Activated CD4-positive, alpha-beta memory T cell treated with anti-CD3 and anti-CD28 coated beads for 36 hours (primary cell): ENCODE measurements at regions of chr1 and their contacts with region 1.

Region 1: DNA sequence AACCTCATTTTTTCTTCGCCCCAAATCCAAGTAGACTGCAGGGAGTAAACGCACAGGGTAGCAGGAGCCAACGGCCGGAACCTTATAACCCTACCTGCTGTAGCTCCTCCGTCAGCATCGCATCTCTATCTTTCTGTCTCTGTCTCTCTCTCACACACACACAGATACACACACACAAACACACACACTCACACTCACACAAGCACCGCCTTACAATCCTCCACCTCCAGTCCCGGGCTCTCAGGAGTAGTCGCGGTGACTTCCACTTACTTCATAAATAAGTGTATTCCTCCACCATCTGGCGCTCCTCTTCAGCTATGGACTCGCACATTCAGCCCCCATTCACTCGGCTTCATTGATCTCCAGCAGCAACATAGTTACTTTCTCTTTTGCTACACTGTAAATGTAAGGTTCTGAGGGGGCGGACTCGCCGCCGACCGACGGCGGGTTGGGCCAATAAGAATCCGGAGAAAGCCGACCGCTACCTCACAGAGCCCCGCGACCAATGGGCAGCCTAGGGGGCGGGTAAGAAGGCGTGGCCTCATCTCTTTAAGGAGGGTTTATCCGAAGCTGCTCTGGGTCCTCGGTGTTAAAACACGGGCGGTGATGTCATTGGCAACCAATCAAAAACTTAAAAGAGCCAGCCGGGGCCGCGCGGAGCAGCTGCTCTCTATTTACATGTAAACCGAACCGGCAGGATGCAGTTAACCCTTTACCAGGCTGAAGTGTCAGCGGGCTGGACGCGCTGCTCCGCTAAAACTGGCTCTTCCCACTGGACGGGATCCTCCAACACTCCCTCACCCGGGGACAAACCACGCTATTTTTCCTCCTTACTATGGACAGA is at the start of gene DUSP10:
- DNase-seq: peak; percentile 99
- H3K4me3 Mint-ChIP-seq: no peak within 1 kb of the TSS
- H3K27ac Mint-ChIP-seq: peak within 1 kb of the TSS; percentile 64
- H3K4me1 Mint-ChIP-seq: peaks cover 37% of the 10 kb centered on the region
- H3K27me3 Mint-ChIP-seq: no peaks in the 10 kb centered on the region
- total RNA-seq, gene DUSP10: 8.8 to 8.9 TPM

Region 2: DNA sequence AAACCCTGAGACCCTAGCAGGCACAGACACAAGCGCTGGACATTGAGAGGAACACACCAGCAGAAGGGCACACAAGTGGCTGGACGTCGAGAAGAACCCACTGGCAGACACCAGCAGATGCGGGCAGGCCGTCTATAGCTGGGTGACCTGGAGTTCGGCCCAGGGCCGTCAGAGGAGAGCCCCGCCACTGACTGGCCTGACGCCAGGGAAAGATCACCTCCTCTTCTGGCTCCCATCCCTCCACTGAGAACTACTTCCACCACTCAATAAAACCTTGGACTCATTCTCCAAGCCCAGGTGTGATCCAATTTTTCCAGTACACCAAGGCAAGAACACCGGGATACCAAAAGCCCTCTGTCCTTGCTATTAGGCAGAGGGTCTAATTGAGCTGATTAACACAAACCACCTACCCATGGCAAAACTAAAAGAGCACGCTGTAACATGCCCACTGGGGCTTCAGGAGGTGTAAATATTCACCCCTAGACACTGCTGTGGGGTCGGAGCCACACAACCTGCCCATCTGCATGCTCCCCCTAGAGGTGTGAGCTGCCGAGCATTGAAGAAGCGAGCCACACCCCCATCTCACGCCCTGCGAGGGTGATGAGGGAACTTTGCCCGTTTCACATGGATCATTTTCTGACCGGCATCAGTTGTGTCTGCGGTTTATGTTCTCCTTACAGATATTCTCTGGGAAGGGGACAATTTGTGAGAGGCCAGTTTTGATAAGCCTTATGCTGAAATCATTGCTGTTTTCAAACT is 757.9 kb before region 1 on chr1:
- CTCF ChIA-PET with region 1: no interaction called
- POLR2A ChIA-PET with region 1: no interaction called
- intact Hi-C with region 1: no loop called
- DNase-seq: no peak
- H3K4me3 Mint-ChIP-seq: no peak overlapping the region
- H3K27ac Mint-ChIP-seq: no peak overlapping the region
- H3K4me1 Mint-ChIP-seq: no peaks in the 10 kb centered on the region
- H3K27me3 Mint-ChIP-seq: peaks cover under 1% of the 10 kb centered on the region

Region 3: DNA sequence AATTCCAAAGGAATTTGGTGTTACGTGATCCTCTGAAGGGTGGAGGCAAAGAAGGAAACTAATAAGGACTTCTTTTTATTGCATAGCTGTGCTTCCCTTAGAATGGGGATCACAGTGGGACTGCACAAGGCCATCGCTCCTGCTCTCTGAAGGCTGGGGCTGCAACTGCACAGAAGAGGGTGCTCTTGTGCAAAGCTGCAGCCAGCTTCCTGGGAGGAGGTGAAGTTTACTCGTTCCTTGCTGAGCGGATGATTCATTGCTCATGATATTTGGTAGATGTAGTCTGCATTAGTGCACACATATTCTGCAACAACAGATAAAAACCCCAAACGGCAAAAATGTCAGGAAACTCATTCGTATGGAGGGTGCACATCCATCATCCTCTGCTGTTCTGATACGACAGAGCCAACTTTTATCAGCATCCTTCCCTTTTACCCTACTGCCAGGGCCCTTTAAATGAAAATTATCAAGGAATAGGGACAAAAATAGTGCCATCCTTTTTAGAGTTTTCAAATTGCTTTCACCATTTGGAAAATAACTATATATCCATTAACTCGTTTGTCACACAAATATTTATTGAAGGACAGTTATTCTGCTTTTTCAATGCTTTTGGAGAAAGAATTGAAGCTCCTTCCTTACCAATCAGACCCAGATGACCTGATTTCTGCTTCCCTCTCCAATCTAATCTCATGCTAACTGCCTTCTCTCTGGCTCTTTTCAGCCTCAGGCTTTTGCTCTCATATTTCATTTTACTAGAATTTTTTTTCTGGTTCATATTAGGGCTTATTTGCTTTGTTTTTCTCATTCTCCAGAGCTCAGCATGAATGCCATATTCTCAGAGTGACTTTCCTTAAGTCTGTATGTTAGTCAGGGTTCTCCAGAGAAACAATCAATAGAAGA is 263.6 kb before region 1 on chr1:
- CTCF ChIA-PET with region 1: interaction called, 23 read pairs
- POLR2A ChIA-PET with region 1: no interaction called
- intact Hi-C with region 1: loop called (anchors 1 kb)
- DNase-seq: peak; percentile 70
- H3K4me3 Mint-ChIP-seq: no peak overlapping the region
- H3K27ac Mint-ChIP-seq: no peak overlapping the region
- H3K4me1 Mint-ChIP-seq: peaks cover 3% of the 10 kb centered on the region
- H3K27me3 Mint-ChIP-seq: peaks cover 6% of the 10 kb centered on the region

Region 4: GRCh38 chr1:221693087-221693486 is 48.8 kb before region 1 on chr1:
- CTCF ChIA-PET with region 1: no interaction called
- POLR2A ChIA-PET with region 1: no interaction called
- intact Hi-C with region 1: no loop called
- DNase-seq: no peak
- H3K4me3 Mint-ChIP-seq: no peak overlapping the region
- H3K27ac Mint-ChIP-seq: no peak overlapping the region
- H3K4me1 Mint-ChIP-seq: peaks cover 15% of the 10 kb centered on the region
- H3K27me3 Mint-ChIP-seq: no peaks in the 10 kb centered on the region

Region 5: GRCh38 chr1:221725735-221726672 is 15.9 kb before region 1 on chr1:
- CTCF ChIA-PET with region 1: interaction called, 6 read pairs
- POLR2A ChIA-PET with region 1: interaction called, 31 read pairs
- intact Hi-C with region 1: loop called (anchors 1 kb)
- DNase-seq: no peak
- H3K4me3 Mint-ChIP-seq: peak overlapping the region; percentile 59
- H3K27ac Mint-ChIP-seq: peak overlapping the region; percentile 96
- H3K4me1 Mint-ChIP-seq: peaks cover 80% of the 10 kb centered on the region
- H3K27me3 Mint-ChIP-seq: no peaks in the 10 kb centered on the region

Region 6: DNA sequence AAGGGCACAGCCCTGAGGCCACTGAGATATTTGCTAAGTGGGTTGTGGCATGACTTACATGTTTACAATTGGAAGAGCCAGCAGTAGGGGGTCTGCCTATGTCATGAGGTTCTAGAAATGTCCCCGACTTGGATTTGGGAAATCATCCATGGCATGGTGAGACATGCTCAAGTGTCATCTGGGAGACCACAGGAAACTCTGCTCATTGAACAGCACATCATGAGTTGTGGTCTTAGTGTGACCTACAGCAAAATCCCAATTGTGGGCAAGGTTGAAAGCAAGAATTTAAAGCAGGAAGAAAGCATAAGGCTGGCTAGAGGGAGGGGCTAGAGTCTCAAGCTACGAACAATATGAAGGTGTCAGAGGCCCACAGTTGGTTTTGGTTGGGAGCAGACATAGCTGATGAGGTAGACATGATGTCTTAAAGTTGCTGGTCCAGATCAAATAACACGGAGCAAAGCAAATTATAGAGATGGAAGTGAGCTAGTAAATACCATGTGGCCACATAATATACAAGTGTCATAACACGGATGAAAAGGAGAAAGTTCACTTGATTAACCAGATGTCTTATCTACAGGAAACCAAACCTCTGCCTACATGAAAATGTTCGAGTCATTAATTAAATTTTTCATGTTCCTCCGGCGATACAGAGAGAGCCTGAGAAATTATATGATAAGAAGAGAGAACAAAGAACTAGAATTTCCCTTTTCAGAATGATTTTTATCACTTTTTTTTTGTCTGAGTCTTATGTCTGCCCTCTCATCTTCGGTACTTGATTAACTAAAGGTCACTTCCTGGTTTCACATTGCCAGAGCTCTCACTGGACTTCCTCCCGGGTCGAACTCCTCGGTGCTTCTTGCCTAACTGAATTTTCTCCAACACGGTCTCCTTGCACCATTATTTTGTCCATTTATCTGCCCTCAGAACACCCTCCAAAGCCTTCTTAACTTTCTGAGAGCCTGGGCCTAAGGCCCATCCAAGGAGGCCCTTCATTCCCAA is 67.4 kb after region 1 on chr1:
- CTCF ChIA-PET with region 1: no interaction called
- POLR2A ChIA-PET with region 1: interaction called, 3 read pairs
- intact Hi-C with region 1: loop called (anchors 2 kb)
- DNase-seq: no peak
- H3K4me3 Mint-ChIP-seq: no peak overlapping the region
- H3K27ac Mint-ChIP-seq: no peak overlapping the region
- H3K4me1 Mint-ChIP-seq: peaks cover 35% of the 10 kb centered on the region
- H3K27me3 Mint-ChIP-seq: no peaks in the 10 kb centered on the region

Region 7: GRCh38 chr1:221858818-221859611 is 117.1 kb after region 1 on chr1:
- CTCF ChIA-PET with region 1: interaction called, 7 read pairs
- POLR2A ChIA-PET with region 1: interaction called, 3 read pairs
- intact Hi-C with region 1: loop called (anchors 2 kb)
- DNase-seq: peak; percentile 25
- H3K4me3 Mint-ChIP-seq: no peak overlapping the region
- H3K27ac Mint-ChIP-seq: no peak overlapping the region
- H3K4me1 Mint-ChIP-seq: peaks cover 14% of the 10 kb centered on the region
- H3K27me3 Mint-ChIP-seq: no peaks in the 10 kb centered on the region

Region 8: DNA sequence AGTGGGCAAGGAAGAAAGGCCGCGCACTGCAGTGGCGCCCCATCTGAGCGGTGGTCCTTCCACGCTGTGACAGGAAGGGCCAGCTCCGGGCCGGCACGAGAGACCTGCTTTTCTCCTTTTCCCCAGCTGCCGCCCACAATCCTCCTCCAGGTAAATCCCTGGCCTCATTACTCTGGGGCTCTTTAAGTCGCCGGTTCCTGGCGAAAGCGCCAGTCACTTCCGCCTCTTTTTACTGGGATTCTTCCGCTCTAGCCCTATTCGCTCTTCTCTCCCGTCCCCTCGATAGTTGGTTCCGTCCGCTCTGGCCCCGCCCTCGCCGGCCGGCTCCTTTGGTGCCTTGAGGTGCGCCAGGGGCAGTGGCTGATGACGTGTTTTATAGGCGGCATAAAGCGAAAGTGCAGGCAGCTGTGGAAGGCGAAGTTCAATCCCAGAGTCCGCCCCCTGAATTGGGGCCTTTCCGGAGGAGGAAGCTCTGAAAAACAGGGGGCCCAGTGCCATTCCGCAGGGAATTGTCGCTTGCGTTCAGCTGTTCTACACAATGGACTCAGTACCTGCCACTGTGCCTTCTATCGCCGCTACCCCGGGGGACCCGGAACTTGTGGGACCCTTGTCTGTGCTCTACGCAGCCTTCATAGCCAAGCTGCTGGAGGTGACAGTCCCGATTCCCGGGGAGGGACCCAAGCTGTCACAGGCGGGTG is 902.2 kb after region 1 on chr1:
- CTCF ChIA-PET with region 1: no interaction called
- POLR2A ChIA-PET with region 1: no interaction called
- intact Hi-C with region 1: loop called (anchors 5 kb)
- DNase-seq: peak; percentile 99
- H3K4me3 Mint-ChIP-seq: peak overlapping the region; percentile 99
- H3K27ac Mint-ChIP-seq: peak overlapping the region; percentile 94
- H3K4me1 Mint-ChIP-seq: peaks cover 22% of the 10 kb centered on the region
- H3K27me3 Mint-ChIP-seq: no peaks in the 10 kb centered on the region